Endothelial cell of umbilical vein (primary cell): ENCODE measurements at regions of chr4 and their contacts with region 1.

Region 1: DNA sequence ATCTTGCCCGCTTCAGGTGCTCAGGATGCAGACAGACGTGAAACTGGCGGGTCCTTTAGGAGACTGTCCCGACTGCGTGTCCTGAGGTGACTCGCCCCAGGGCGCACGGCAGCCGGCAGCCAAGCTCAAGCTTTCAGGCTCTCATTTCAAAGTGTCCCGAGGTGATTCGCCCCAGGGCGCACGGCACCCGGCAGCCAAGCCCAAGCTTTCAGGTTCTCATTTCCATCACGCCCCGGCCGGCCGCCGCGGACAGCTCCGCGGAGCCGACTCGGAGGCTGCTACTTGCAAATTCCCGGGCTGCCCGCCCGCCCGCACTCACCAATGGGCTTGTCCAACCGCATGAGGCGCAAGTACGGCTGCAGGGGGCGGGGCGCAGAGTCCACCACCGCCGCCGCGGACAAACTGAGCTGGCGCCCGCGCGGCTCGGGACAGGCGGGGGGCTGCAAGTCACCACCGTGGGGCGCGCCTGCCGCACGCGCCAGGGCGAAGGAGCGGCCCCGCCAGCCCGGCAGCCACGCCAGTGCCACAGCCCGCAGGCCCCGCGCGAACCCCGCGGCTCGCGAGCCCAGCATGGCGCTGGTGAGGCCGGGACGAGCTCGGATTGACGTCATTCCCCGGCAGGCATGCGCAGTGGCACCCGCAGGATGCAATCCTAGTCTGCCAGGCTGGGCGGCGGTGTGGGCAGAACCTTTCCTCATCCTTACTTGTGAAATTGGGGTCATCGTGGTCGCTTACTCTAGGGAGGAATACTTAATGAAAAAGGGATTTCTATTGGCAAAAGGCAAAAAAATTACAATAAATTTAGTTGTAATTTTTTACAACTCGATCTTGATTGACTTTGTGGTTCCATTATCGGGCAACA is at the start of gene COQ2:
- DNase-seq: peak; percentile 96
- H3K4me3 ChIP-seq: peak within 1 kb of the TSS; percentile 35 to 82 (median 52)
- H3K27ac ChIP-seq: peak within 1 kb of the TSS; percentile 87
- H3K4me1 ChIP-seq: peaks cover 23% of the 10 kb centered on the region
- H3K27me3 ChIP-seq: no peaks in the 10 kb centered on the region
- CTCF ChIP-seq: peak in 1 of 2 donors; percentile 26
- POLR2A ChIP-seq: peak; percentile 92
- total RNA-seq, gene COQ2: 26.4 and 28.0 TPM in 2 replicates

Region 2: DNA sequence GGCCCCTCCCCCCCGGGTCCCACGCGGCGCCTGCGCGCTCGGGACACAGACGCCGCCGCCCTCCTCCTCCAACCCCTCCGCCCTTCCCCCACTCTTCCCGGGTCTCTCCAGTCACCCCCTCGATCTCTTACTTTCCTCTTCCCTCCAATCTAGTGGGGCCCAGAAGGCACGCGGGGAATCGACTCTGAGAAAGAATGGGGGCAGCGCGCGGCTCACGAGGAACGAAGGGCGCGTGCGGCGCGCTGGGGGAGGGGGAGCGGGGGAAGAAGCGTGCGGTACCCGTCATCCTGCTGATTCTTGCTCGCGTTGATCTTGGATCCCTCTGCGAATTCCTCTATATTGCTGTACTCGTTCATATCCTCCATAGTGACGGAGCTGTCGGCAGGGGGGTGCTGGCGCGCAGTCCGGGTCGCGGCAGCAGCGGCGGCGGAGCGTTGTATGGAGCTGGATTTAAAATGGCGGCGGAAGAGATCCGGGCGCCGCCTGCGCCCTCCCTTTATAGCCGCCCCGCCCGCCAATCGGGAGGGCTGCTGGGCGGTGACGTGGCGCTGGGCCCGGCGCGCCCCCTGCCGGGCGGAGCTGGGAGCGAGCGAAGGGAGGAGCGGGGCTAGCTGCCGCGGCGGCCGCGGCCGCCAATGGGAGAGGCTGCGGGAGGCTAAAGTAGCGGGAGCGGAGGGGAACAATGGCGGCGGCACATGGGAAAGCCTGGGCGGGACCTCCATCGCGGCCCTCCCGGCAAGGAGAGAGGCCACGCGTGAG is 855.3 kb before region 1 on chr4:
- CTCF ChIA-PET with region 1: no interaction called
- POLR2A ChIA-PET with region 1: no interaction called
- dilution Hi-C with region 1: no loop called
- intact Hi-C with region 1: loop called (anchors 1 kb)
- DNase-seq: peak; percentile 95
- H3K4me3 ChIP-seq: peak overlapping the region; percentile 89 to 100 (median 98)
- H3K27ac ChIP-seq: peak overlapping the region; percentile 99
- H3K4me1 ChIP-seq: peaks cover 31% of the 10 kb centered on the region
- H3K27me3 ChIP-seq: no peaks in the 10 kb centered on the region
- CTCF ChIP-seq: peak; percentile 80 to 99
- POLR2A ChIP-seq: peak; percentile 60

Region 3: DNA sequence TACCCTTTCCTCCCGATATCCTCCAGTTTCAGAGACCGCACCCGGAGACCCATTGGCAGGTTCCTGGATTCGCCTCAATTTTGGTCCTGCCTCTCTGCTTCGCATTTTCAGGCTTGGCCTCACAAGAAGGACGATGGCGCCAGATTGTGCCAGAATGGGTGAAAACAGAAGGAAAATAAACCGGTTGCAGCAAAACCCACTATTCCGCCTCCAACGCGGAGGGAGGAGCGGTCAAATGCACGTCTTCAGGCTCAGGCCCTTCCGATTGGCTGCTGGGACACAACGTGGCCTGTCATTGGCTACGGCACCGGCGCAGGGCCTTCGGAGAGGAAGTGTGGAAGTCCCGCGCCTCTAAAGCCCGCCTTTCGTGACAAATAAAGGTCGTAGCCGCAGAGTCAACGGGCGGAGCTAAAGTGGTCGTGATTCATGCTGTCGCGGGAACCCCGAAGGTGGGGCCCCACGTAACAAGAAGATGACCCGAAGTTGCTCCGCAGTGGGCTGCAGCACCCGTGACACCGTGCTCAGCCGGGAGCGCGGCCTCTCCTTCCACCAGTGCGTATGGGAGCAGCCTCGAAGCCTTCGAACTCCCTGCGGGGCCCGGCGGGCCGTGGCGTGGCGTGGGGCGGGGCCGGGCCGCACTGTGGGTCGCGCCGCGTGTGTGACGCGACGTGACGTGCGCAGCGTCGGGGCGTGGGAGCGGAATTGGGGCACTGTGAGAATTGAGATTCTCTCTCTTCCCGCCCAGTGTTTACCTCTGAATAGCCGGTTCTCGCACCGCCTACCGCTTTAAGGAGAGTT is 383.9 kb before region 1 on chr4 and contains the start of gene THAP9:
- CTCF ChIA-PET with region 1: interaction called, 18 read pairs
- POLR2A ChIA-PET with region 1: interaction called, 3 read pairs
- dilution Hi-C with region 1: no loop called
- intact Hi-C with region 1: loop called (anchors 1 kb)
- DNase-seq: peak; percentile 100
- H3K4me3 ChIP-seq: peak within 1 kb of the TSS; percentile 71 to 92 (median 90)
- H3K27ac ChIP-seq: peak within 1 kb of the TSS; percentile 96
- H3K4me1 ChIP-seq: peaks cover 18% of the 10 kb centered on the region
- H3K27me3 ChIP-seq: no peaks in the 10 kb centered on the region
- CTCF ChIP-seq: no peak
- POLR2A ChIP-seq: peak; percentile 75
- total RNA-seq, gene THAP9: 1.7 and 3.2 TPM in 2 replicates

Region 4: GRCh38 chr4:83046693-83047473 is 237.5 kb before region 1 on chr4:
- CTCF ChIA-PET with region 1: interaction called, 32 read pairs
- POLR2A ChIA-PET with region 1: no interaction called
- dilution Hi-C with region 1: no loop called
- intact Hi-C with region 1: no loop called
- DNase-seq: no peak
- H3K4me3 ChIP-seq: no peak overlapping the region
- H3K27ac ChIP-seq: no peak overlapping the region
- H3K4me1 ChIP-seq: no peaks in the 10 kb centered on the region
- H3K27me3 ChIP-seq: no peaks in the 10 kb centered on the region
- CTCF ChIP-seq: no peak
- POLR2A ChIP-seq: no peak

Region 5: GRCh38 chr4:83197555-83198235 is 86.7 kb before region 1 on chr4:
- CTCF ChIA-PET with region 1: no interaction called
- POLR2A ChIA-PET with region 1: no interaction called
- dilution Hi-C with region 1: no loop called
- intact Hi-C with region 1: no loop called
- DNase-seq: no peak
- H3K4me3 ChIP-seq: no peak overlapping the region
- H3K27ac ChIP-seq: no peak overlapping the region
- H3K4me1 ChIP-seq: peaks cover 10% of the 10 kb centered on the region
- H3K27me3 ChIP-seq: no peaks in the 10 kb centered on the region
- CTCF ChIP-seq: no peak
- POLR2A ChIP-seq: no peak

Region 6: DNA sequence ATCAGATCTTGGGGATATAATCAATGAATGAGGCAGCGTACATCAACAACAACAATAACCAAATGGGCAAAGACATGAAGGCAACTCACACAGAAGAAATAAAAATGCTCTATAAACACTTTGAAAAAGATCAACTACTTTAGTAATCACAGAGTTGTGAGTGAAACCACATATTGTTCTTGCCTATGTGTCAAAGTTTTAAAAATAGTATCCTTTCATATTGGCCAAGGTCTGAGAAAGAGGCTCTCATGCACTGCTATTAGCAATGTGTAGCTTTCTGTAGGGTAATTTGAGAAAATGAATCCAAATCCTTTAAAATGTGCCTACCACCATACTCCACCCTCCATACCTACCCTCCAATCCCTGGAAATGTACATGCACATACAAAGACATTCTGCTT is 24.8 kb before region 1 on chr4:
- CTCF ChIA-PET with region 1: interaction called, 39 read pairs
- POLR2A ChIA-PET with region 1: no interaction called
- dilution Hi-C with region 1: no loop called
- intact Hi-C with region 1: no loop called
- DNase-seq: no peak
- H3K4me3 ChIP-seq: no peak overlapping the region
- H3K27ac ChIP-seq: no peak overlapping the region
- H3K4me1 ChIP-seq: peaks cover 39% of the 10 kb centered on the region
- H3K27me3 ChIP-seq: no peaks in the 10 kb centered on the region
- CTCF ChIP-seq: no peak
- POLR2A ChIP-seq: no peak

Region 7: GRCh38 chr4:83320548-83320947 is 36.1 kb after region 1 on chr4:
- CTCF ChIA-PET with region 1: interaction called, 10 read pairs
- POLR2A ChIA-PET with region 1: no interaction called
- dilution Hi-C with region 1: no loop called
- intact Hi-C with region 1: loop called (anchors 1 kb)
- DNase-seq: peak; percentile 91
- H3K4me3 ChIP-seq: no peak overlapping the region
- H3K27ac ChIP-seq: no peak overlapping the region
- H3K4me1 ChIP-seq: peaks cover 12% of the 10 kb centered on the region
- H3K27me3 ChIP-seq: no peaks in the 10 kb centered on the region
- CTCF ChIP-seq: no peak
- POLR2A ChIP-seq: no peak

Region 8: GRCh38 chr4:83362492-83363329 is 78.3 kb after region 1 on chr4:
- CTCF ChIA-PET with region 1: interaction called, 18 read pairs
- POLR2A ChIA-PET with region 1: no interaction called
- dilution Hi-C with region 1: no loop called
- intact Hi-C with region 1: loop called (anchors 1 kb)
- DNase-seq: peak; percentile 61
- H3K4me3 ChIP-seq: no peak overlapping the region
- H3K27ac ChIP-seq: no peak overlapping the region
- H3K4me1 ChIP-seq: peaks cover 13% of the 10 kb centered on the region
- H3K27me3 ChIP-seq: no peaks in the 10 kb centered on the region
- CTCF ChIP-seq: peak; percentile 35 to 44
- POLR2A ChIP-seq: no peak

Region 9: GRCh38 chr4:83751336-83751943 is 467.0 kb after region 1 on chr4:
- CTCF ChIA-PET with region 1: no interaction called
- POLR2A ChIA-PET with region 1: no interaction called
- dilution Hi-C with region 1: no loop called
- intact Hi-C with region 1: no loop called
- DNase-seq: no peak
- H3K4me3 ChIP-seq: no peak overlapping the region
- H3K27ac ChIP-seq: no peak overlapping the region
- H3K4me1 ChIP-seq: no peaks in the 10 kb centered on the region
- H3K27me3 ChIP-seq: peaks cover 0 to 5% of the 10 kb centered on the region in 2 experiments
- CTCF ChIP-seq: no peak
- POLR2A ChIP-seq: no peak